ENCODE measurements at regions of chr5 and their contacts with region 1.

Region 1: DNA sequence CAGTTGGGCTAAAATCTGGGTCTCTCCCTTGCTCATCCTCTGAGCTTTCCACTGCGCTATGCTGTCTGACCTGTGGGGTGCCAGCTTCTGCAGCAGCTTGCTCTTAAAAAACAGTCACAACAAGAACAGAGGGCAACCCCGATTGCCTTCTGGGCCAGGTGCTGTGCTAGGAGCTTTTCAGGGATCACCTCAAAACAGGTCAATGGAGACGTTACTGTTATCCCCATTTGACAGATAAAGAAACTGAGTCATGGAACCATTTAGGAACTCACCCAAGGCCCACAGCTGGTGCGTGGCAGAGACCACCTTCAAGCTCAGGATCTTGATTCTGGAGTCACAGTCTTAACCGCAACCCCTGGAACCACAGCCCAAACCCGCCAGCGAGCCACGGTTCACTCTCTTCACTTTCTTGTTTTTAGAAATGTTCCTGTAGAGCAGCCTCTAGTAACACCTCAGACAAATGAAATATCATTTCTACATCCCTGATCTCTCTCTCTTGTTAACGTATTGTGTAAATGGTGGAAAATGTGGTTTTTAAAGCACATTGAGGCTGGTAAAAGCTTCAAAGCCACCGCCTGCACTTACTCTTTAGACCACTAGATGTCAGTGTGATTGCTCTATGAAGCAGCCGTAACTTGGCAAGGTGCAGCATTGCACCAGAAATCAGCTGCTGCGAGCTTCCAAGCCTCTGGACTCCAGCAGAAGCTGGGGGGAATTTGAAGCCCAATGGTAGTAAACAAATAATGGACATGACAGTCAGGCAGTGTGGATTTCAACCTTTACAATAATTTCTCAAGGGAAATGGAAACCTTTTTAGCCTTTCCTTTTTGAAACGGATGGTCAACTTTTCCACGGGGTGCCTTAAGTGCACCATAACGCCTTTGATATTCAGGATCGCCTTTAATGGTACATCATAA is 1.7 kb downstream of the FYB1 start:
- DNase-seq: peak; percentile 42 to 74
- ATAC-seq: peak; percentile 68 to 85 (median 80)
- H3K4me3 ChIP-seq: peak overlapping the region in 2 of 10 donors; percentile 8 to 54
- H3K27ac ChIP-seq: peak overlapping the region in 1 of 10 donors; percentile 76
- H3K4me1 ChIP-seq: peaks cover 0 to 85% (median 0%) of the 10 kb centered on the region in 9 donors
- H3K27me3 ChIP-seq: no peaks in the 10 kb centered on the region
- CTCF ChIP-seq: peak; percentile 93 to 96 (median 95)

Region 2: GRCh38 chr5:39283231-39283818 is 65.7 kb after region 1 on chr5:
- intact Hi-C with region 1: loop called (anchors 2 to 10 kb)
- DNase-seq: peak in 1 of 2 donors; percentile 34
- ATAC-seq: peak in 7 of 8 donors; percentile 72 to 83 (median 79)
- H3K4me3 ChIP-seq: no peak overlapping the region
- H3K27ac ChIP-seq: no peak overlapping the region
- H3K4me1 ChIP-seq: peaks cover 0 to 5% (median 0%) of the 10 kb centered on the region in 9 donors
- H3K27me3 ChIP-seq: peaks cover 0 to 10% (median 0%) of the 10 kb centered on the region in 7 donors
- CTCF ChIP-seq: peak; percentile 35 to 73 (median 66)

Region 3: DNA sequence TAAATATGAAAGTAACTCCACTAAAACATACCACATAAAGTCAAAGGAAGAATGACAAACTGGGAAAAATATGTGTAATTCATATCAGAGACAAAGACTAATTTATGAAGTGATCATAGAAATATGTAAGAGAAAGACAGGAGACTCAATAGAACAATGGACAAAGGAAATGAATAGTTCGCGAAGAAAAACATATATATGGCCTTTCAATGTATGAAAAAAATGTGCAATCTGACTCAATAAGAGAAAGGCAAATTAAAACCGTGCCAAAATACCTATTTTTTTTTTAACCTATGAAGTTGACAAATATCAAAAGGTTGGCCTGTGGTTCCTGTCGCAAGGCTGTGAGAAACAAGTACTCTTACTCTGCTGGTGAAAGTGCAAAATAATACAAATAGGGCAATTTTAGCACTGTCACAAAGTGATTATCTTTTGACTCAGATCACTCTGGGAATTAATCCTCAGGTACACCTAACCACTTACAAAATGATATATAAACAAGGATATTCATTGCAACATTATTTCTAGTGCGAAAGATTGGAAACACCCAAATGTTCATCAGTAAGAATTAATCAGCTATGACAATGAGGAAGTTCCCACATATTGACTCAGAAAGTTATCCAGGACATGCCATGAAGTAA is 143.0 kb after region 1 on chr5:
- intact Hi-C with region 1: loop called in 1 of 10 experiments (anchors 10 kb)
- DNase-seq: no peak
- ATAC-seq: no peak
- H3K4me3 ChIP-seq: no peak overlapping the region
- H3K27ac ChIP-seq: no peak overlapping the region
- H3K4me1 ChIP-seq: no peaks in the 10 kb centered on the region
- H3K27me3 ChIP-seq: no peaks in the 10 kb centered on the region
- CTCF ChIP-seq: no peak

Region 4: GRCh38 chr5:39547553-39548154 is 330.0 kb after region 1 on chr5:
- intact Hi-C with region 1: loop called in 1 of 10 experiments (anchors 5 kb)
- DNase-seq: peak in 1 of 2 donors; percentile 87
- ATAC-seq: peak in 7 of 8 donors; percentile 59 to 92 (median 84)
- H3K4me3 ChIP-seq: peak overlapping the region in 4 of 10 donors; percentile 5 to 9 (median 5)
- H3K27ac ChIP-seq: peak overlapping the region in 4 of 10 donors; percentile 2 to 41 (median 6)
- H3K4me1 ChIP-seq: peaks cover 0 to 29% (median 7%) of the 10 kb centered on the region in 9 donors
- H3K27me3 ChIP-seq: no peaks in the 10 kb centered on the region
- CTCF ChIP-seq: peak; percentile 45 to 89 (median 78)

Region 5: GRCh38 chr5:39570403-39571027 is 352.9 kb after region 1 on chr5:
- intact Hi-C with region 1: loop called in 9 of 10 experiments (anchors 2 to 10 kb)
- DNase-seq: no peak
- ATAC-seq: no peak
- H3K4me3 ChIP-seq: no peak overlapping the region
- H3K27ac ChIP-seq: no peak overlapping the region
- H3K4me1 ChIP-seq: peaks cover 0 to 8% (median 0%) of the 10 kb centered on the region in 9 donors
- H3K27me3 ChIP-seq: peaks cover 0 to 13% (median 0%) of the 10 kb centered on the region in 7 donors
- CTCF ChIP-seq: peak; percentile 42 to 78 (median 65)

Measured in heart right ventricle (tissue), 16 donors.